ENCODE measurements at regions of chr3 and their contacts with region 1.

Region 1: GRCh38 chr3:195612075-195612800 is 28.5 kb upstream of the APOD start:
- DNase-seq: no peak
- ATAC-seq: no peak
- H3K4me3 ChIP-seq: no peak overlapping the region
- H3K4me3 Mint-ChIP-seq: no peak overlapping the region
- H3K27ac ChIP-seq: no peak overlapping the region
- H3K27ac Mint-ChIP-seq: peak overlapping the region in 6 of 9 donors; percentile 11 to 84 (median 67)
- H3K4me1 ChIP-seq: peaks cover 6 to 23% of the 10 kb centered on the region in 2 donors
- H3K4me1 Mint-ChIP-seq: peaks cover 26 to 63% (median 43%) of the 10 kb centered on the region in 7 donors
- H3K27me3 ChIP-seq: no peaks in the 10 kb centered on the region
- H3K27me3 Mint-ChIP-seq: peaks cover 0 to 2% (median 0%) of the 10 kb centered on the region in 5 donors

Region 2: DNA sequence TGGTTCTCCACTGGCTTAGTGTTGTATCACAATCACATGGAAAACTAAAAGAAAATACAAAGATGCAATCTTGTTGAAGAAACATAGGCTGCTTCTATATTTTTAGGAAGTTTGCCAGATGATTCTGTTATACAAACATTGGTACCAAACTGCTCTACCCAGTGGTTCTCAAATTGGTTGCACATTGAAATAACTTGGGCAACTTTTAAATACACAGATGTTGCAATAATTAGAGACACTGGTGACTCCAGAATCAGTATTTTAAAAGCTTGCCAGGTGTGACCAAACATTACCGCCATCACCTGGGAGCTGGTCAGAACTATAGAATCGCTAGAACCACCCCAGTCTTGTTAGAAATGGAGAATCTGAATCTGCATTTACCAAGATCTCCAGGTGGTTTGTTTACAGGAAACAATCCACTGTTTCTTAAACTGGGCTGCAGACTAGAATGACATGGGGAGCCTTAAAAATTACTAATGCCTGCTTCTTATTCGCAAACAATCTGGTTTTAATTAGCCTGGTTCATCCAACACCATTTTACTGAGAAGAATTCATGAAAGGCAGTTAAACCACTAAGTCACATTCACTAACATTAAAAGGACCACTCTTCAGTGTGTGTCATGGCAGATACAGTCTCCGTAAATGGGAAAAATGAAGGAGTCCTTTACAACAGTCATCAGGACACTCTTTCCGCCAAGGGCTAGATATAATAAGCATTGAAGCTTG is 245.9 kb before region 1 on chr3:
- CTCF ChIA-PET with region 1: no interaction called
- POLR2A ChIA-PET with region 1: no interaction called
- intact Hi-C with region 1: no loop called
- DNase-seq: no peak
- ATAC-seq: no peak
- H3K4me3 ChIP-seq: no peak overlapping the region
- H3K4me3 Mint-ChIP-seq: no peak overlapping the region
- H3K27ac ChIP-seq: no peak overlapping the region
- H3K27ac Mint-ChIP-seq: peak overlapping the region in 3 of 9 donors; percentile 10 to 23 (median 16)
- H3K4me1 ChIP-seq: peaks cover 0 to 3% of the 10 kb centered on the region in 2 donors
- H3K4me1 Mint-ChIP-seq: peaks cover 0 to 58% (median 31%) of the 10 kb centered on the region in 7 donors
- H3K27me3 ChIP-seq: no peaks in the 10 kb centered on the region
- H3K27me3 Mint-ChIP-seq: no peaks in the 10 kb centered on the region

Region 3: GRCh38 chr3:195558602-195559001 is 53.6 kb before region 1 on chr3:
- CTCF ChIA-PET with region 1: no interaction called
- POLR2A ChIA-PET with region 1: interaction called, 4 read pairs
- intact Hi-C with region 1: loop called in 1 of 2 experiments (anchors 5 kb)
- DNase-seq: peak in 7 of 9 donors; percentile 56 to 75 (median 67)
- ATAC-seq: peak; percentile 72
- H3K4me3 ChIP-seq: no peak overlapping the region
- H3K4me3 Mint-ChIP-seq: peak overlapping the region in 1 of 10 donors; percentile 33
- H3K27ac ChIP-seq: no peak overlapping the region
- H3K27ac Mint-ChIP-seq: peak overlapping the region in 8 of 9 donors; percentile 46 to 83 (median 68)
- H3K4me1 ChIP-seq: peaks cover 0 to 37% of the 10 kb centered on the region in 2 donors
- H3K4me1 Mint-ChIP-seq: peaks cover 20 to 45% (median 38%) of the 10 kb centered on the region in 7 donors
- H3K27me3 ChIP-seq: no peaks in the 10 kb centered on the region
- H3K27me3 Mint-ChIP-seq: no peaks in the 10 kb centered on the region

Region 4: DNA sequence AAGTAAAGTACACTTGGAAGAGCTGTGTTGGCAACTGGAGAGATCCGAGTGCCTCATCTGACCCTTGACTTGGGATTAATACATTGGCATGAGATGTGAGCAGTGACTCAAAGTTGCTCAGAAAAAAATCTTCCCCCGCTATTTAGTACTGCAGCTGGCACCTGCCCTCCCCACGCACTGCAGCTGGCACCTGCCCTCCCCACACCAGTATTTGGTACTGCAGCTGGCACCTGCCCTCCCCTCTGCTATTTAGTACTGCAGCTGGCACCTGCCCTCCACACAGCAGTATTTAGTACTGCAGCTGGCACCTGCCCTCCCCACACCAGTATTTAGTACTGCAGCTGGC is 104.6 kb after region 1 on chr3:
- CTCF ChIA-PET with region 1: no interaction called
- POLR2A ChIA-PET with region 1: no interaction called
- intact Hi-C with region 1: loop called in 1 of 2 experiments (anchors 5 kb)
- DNase-seq: no peak
- ATAC-seq: no peak
- H3K4me3 ChIP-seq: no peak overlapping the region
- H3K4me3 Mint-ChIP-seq: no peak overlapping the region
- H3K27ac ChIP-seq: no peak overlapping the region
- H3K27ac Mint-ChIP-seq: peak overlapping the region in 1 of 9 donors; percentile 16
- H3K4me1 ChIP-seq: no peaks in the 10 kb centered on the region
- H3K4me1 Mint-ChIP-seq: peaks cover 0 to 4% (median 0%) of the 10 kb centered on the region in 7 donors
- H3K27me3 ChIP-seq: no peaks in the 10 kb centered on the region
- H3K27me3 Mint-ChIP-seq: peaks cover 0 to 5% (median 0%) of the 10 kb centered on the region in 5 donors

Measured in naive thymus-derived CD4-positive, alpha-beta T cell (primary cell).